PC-9 (cell line): ENCODE measurements at regions of chr19 and their contacts with region 1.

Region 1: DNA sequence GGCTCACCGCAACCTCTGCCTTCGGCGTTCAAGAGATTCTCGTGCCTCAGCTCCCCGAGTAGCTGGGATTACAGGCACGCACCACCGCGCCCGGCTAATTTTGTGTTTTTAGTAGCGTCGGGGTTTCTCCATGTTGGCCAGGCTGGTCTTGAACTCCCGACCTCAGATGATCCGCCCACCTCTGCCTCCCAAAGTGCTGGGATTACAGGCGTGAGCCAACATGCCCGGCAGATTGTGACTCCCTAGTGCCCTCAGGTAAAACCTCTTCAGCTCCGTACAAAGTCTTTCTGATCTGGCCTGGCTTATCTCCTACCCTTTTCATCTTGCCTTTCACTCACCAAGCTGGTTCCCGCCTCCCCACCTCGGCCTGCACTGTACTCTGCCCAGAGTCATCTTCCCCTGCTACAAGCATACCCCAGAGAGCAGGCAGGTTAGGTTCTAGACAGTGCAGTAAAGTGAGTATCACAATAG is 15.0 kb downstream of the BICRA start:
- DNase-seq: no peak
- H3K4me3 ChIP-seq: no peak overlapping the region
- H3K27ac ChIP-seq: no peak overlapping the region
- H3K4me1 ChIP-seq: no peaks in the 10 kb centered on the region
- H3K27me3 ChIP-seq: no peaks in the 10 kb centered on the region
- CTCF ChIP-seq: no peak

Region 2: GRCh38 chr19:47582320-47582909 is 41.5 kb before region 1 on chr19:
- CTCF ChIA-PET with region 1: interaction called, 17 read pairs
- POLR2A ChIA-PET with region 1: no interaction called
- intact Hi-C with region 1: no loop called
- DNase-seq: no peak
- H3K4me3 ChIP-seq: no peak overlapping the region
- H3K27ac ChIP-seq: peak overlapping the region; percentile 44; the same call in 1 of the 2 replicates
- H3K4me1 ChIP-seq: peaks cover 39% of the 10 kb centered on the region
- H3K27me3 ChIP-seq: no peaks in the 10 kb centered on the region
- CTCF ChIP-seq: no peak

Region 3: GRCh38 chr19:47707135-47707925 is 83.4 kb after region 1 on chr19:
- CTCF ChIA-PET with region 1: no interaction called
- POLR2A ChIA-PET with region 1: interaction called, 10 read pairs
- intact Hi-C with region 1: no loop called
- DNase-seq: peak; percentile 71 to 82
- H3K4me3 ChIP-seq: no peak overlapping the region
- H3K27ac ChIP-seq: no peak overlapping the region
- H3K4me1 ChIP-seq: no peaks in the 10 kb centered on the region
- H3K27me3 ChIP-seq: no peaks in the 10 kb centered on the region
- CTCF ChIP-seq: peak; percentile 93

Region 4: GRCh38 chr19:47794526-47794925 is 170.6 kb after region 1 on chr19:
- CTCF ChIA-PET with region 1: no interaction called
- POLR2A ChIA-PET with region 1: no interaction called
- intact Hi-C with region 1: no loop called
- DNase-seq: no peak
- H3K4me3 ChIP-seq: no peak overlapping the region
- H3K27ac ChIP-seq: no peak overlapping the region
- H3K4me1 ChIP-seq: peaks cover 6% of the 10 kb centered on the region
- H3K27me3 ChIP-seq: 0 out of 2 replicates have a peak, but pooled peaks cover 7% of the 10 kb centered on the region
- CTCF ChIP-seq: peak; percentile 24; the same call in 1 of the 2 replicates